A549 (cell line): ENCODE measurements at regions of chr15 and their contacts with region 1.

Region 1: DNA sequence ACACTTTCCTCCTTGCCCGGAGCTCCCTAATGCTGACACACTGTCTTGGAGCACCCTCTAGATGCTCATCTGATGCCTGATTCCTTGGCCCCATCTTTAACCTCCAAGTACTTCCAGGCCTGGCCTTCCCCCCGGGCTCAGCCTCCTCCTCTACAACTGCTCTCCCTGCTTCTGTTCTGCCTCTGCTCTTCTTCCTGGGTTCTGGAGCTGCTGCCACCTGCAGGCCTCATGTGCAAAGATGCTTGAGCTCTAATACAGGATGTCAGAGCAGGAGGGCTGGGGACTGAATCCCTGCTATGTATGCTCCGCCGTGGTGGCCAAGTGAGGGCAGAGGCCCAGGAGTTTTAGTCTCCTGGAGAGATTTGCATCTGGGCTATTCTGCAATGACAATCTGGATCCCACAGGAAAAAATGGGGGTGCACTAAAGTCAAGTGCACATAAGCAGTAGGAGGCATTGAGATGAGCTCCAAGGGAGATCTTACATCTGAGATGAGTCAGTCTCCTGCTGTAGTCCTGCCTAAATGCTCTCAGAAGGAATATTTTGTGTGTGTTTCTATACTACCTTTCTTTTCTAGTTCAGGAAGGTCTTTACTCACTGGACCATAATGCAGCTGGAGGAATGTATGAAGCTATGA is 296.3 kb downstream of the UACA start:
- DNase-seq: peak; percentile 79 to 88
- ATAC-seq: peak; percentile 93 to 96
- H3K4me3 ChIP-seq: no peak overlapping the region
- H3K27ac ChIP-seq: 0 out of 6 replicates have a peak overlapping the region, but pooled peaks of 1 of the 2 experiments have one; percentile 7
- H3K4me1 ChIP-seq: peaks cover 13% of the 10 kb centered on the region; the same call in 2 of the 3 replicates
- CTCF ChIP-seq: peak; percentile 84
- EP300 ChIP-seq: no peak
- POLR2A ChIP-seq: no peak
- RAD21 ChIP-seq: peak; percentile 81 to 84

Region 2: GRCh38 chr15:69475769-69476358 is 991.1 kb before region 1 on chr15:
- CTCF ChIA-PET with region 1: interaction called, 91 read pairs
- POLR2A ChIA-PET with region 1: no interaction called
- DNase-seq: peak; percentile 83 to 97
- ATAC-seq: peak; percentile 85 to 92
- H3K4me3 ChIP-seq: no peak overlapping the region
- H3K27ac ChIP-seq: no peak overlapping the region
- H3K4me1 ChIP-seq: no peaks in the 10 kb centered on the region
- CTCF ChIP-seq: peak; percentile 95
- EP300 ChIP-seq: no peak
- POLR2A ChIP-seq: no peak
- RAD21 ChIP-seq: peak; percentile 98 to 99

Region 3: GRCh38 chr15:69576035-69576526 is 890.9 kb before region 1 on chr15:
- CTCF ChIA-PET with region 1: interaction called, 12 read pairs
- POLR2A ChIA-PET with region 1: no interaction called
- DNase-seq: peak; percentile 68 to 87
- ATAC-seq: peak; percentile 79 to 92
- H3K4me3 ChIP-seq: no peak overlapping the region
- H3K27ac ChIP-seq: peak overlapping the region; percentile 28 to 50; a peak in 4 of 6 replicates
- H3K4me1 ChIP-seq: peaks cover 37% of the 10 kb centered on the region; the same call in 2 of the 3 replicates
- CTCF ChIP-seq: peak; percentile 94
- EP300 ChIP-seq: no peak
- POLR2A ChIP-seq: no peak
- RAD21 ChIP-seq: peak; percentile 98

Region 4: GRCh38 chr15:70284438-70285214 is 182.4 kb before region 1 on chr15:
- CTCF ChIA-PET with region 1: interaction called, 14 read pairs
- POLR2A ChIA-PET with region 1: no interaction called
- DNase-seq: no peak
- ATAC-seq: no peak
- H3K4me3 ChIP-seq: no peak overlapping the region
- H3K27ac ChIP-seq: no peak overlapping the region
- H3K4me1 ChIP-seq: peaks cover 15% of the 10 kb centered on the region
- CTCF ChIP-seq: no peak
- EP300 ChIP-seq: no peak
- POLR2A ChIP-seq: no peak
- RAD21 ChIP-seq: no peak

Region 5: GRCh38 chr15:70426105-70426821 is 40.7 kb before region 1 on chr15:
- CTCF ChIA-PET with region 1: interaction called, 15 read pairs
- POLR2A ChIA-PET with region 1: no interaction called
- DNase-seq: no peak
- ATAC-seq: no peak
- H3K4me3 ChIP-seq: no peak overlapping the region
- H3K27ac ChIP-seq: no peak overlapping the region
- H3K4me1 ChIP-seq: peaks cover 33% of the 10 kb centered on the region
- CTCF ChIP-seq: no peak
- EP300 ChIP-seq: no peak
- POLR2A ChIP-seq: no peak
- RAD21 ChIP-seq: no peak

Region 6: DNA sequence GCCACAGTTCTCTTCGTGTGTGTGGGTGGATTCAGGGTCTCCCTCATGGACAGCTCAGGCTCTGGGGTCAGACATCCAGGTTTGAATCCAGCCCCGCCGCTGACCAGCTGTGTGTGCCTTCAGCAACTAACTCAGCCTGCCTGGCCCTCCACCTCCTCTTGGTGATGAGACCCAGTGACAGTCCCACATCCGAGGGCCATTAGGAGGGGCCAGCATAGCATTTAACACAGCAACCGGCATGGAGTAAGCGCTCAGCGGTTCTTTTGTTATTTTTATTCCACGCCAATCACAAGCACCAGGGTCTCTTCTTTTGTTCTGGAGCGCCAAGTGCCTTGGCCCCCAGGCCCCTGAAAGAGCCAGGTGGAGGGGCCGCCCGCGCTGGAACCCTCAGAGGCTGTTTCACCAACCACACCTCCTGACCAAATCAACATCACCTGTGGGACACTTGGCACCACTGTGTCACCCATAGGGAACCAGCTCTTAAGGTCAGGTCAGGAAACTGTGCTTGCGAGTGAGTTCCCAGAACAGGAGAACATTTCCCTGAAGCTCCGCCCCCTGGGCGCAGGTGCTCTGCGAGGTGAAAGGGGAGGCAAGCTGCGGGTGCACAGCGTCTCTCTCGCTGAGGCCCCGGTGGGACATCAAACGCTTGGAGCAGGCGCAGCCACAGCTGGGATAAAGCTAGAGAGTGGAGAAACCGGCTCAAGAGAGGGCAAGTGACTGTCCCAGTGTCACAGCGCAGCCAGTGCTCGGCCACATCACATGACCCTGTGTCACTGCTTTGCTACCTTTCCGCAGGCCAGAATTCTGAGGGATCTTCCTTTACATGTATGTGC is 15.0 kb before region 1 on chr15:
- CTCF ChIA-PET with region 1: interaction called, 44 read pairs
- POLR2A ChIA-PET with region 1: no interaction called
- DNase-seq: no peak
- ATAC-seq: 0 out of 6 replicates have a peak, but pooled peaks of 1 of the 2 experiments have one; percentile 22
- H3K4me3 ChIP-seq: no peak overlapping the region
- H3K27ac ChIP-seq: no peak overlapping the region
- H3K4me1 ChIP-seq: no peaks in the 10 kb centered on the region
- CTCF ChIP-seq: no peak
- EP300 ChIP-seq: no peak
- POLR2A ChIP-seq: no peak
- RAD21 ChIP-seq: no peak

Region 7: DNA sequence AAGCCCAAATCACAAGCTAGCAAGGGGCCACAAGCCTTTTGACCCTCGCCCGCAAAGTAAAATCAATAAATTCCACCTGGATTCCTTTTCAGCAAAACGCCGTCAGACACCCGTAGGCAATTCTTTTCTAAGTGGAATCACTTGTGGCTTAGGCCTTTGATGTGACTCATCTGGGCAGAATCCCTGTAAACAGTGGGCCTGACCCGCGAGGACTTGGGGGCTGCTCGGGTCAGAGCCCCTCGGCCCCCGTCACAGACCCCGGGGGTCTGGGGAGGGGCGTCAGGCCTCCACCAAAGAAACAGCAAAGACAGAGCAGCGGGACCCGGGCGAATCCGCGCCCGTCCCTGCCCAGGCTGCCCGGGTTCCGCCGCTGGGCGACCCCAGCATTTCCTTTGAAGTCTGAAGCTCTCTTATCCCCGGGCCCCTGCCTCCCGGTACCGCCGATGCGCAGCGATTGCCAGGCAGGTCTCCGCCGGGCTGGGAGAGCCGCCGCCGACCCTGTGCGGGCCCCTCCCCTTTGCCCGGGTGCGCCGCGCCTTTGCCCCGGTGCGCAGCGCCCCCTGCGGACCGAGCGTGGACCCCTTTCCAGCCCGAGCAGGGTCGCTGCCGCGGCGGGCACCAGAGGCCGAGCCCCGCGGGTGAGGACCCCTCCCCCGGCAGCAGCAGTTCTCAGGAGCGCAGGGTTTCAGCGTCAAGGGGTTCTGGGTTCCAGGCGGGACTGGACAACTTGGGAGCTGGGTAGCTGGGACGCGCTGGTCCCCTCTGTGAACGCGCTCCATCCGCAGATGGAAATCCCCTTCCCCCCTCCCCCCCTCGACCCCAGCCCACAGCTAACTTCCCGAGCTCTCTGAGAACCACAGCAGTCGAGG is 118.1 kb after region 1 on chr15:
- CTCF ChIA-PET with region 1: interaction called, 13 read pairs
- POLR2A ChIA-PET with region 1: no interaction called
- DNase-seq: peak; percentile 52 to 77
- ATAC-seq: peak; percentile 77 to 94
- H3K4me3 ChIP-seq: peak overlapping the region; percentile 41
- H3K27ac ChIP-seq: peak overlapping the region; percentile 71 to 83
- H3K4me1 ChIP-seq: peaks cover 23% of the 10 kb centered on the region
- CTCF ChIP-seq: peak; percentile 89
- EP300 ChIP-seq: no peak
- POLR2A ChIP-seq: no peak
- RAD21 ChIP-seq: peak; percentile 77 to 96